Natural killer cell (primary cell): ENCODE measurements at regions of chr4 and their contacts with region 1.

Region 1: DNA sequence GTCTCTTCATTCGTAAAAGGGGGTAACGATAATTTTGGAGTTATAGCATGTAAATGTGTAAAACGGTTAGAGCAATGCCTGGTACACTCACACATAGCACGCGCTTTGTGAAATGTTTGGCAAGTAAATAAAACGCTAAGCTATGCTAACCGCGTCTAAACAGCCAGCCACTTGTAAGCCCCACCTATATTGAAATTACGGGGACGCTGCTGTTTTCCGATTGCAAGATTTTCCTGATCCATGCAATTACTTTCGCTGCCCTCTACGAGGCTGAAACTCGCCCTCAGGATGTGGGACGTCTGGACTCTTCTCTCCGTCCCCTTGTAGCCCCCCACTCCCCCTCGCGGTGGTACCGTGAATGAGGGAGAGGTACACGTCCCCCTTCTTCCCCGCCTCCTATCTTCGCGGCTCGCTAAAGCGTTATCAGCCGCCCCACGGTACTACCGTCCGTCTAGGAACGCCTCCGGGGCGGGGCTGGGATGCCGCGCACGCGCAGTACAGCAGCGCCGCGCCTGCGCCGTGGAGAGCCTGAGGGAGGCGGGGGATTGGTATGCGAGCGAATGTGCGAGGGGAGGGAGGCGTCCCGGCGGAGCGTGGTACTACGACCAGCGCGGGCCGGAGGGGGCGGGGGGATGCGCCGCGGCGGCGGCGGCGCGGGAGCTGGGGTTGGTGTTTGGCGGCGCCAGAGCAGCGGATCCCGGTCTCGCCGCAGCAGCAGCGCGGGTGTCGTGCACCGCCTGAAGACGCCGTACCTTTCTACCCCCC is at the start of gene STIM2:
- DNase-seq: peak; percentile 99
- ATAC-seq: peak; percentile 65 to 86 (median 72)
- H3K4me3 ChIP-seq: peak within 1 kb of the TSS; percentile 67
- H3K4me3 Mint-ChIP-seq: peak within 1 kb of the TSS; percentile 100
- H3K27ac ChIP-seq: peak within 1 kb of the TSS; percentile 84
- H3K27ac Mint-ChIP-seq: peak within 1 kb of the TSS; percentile 95 to 98
- H3K4me1 ChIP-seq: peaks cover 18% of the 10 kb centered on the region
- H3K4me1 Mint-ChIP-seq: peaks cover 69 to 71% of the 10 kb centered on the region in 2 donors
- H3K27me3 ChIP-seq: no peaks in the 10 kb centered on the region
- H3K27me3 Mint-ChIP-seq: no peaks in the 10 kb centered on the region
- CTCF ChIP-seq: peak; percentile 10
- total RNA-seq, gene STIM2: 98.3 to 104 (median 100) TPM

Region 2: GRCh38 chr4:26320538-26321325 is 539.6 kb before region 1 on chr4 and contains the start of gene RBPJ:
- intact Hi-C with region 1: loop called (anchors 2 kb)
- DNase-seq: peak; percentile 82 to 93
- ATAC-seq: peak; percentile 45 to 52 (median 49)
- H3K4me3 ChIP-seq: peak within 1 kb of the TSS; percentile 96
- H3K4me3 Mint-ChIP-seq: peak within 1 kb of the TSS; percentile 100
- H3K27ac ChIP-seq: peak within 1 kb of the TSS; percentile 95
- H3K27ac Mint-ChIP-seq: peak within 1 kb of the TSS; percentile 92 to 96
- H3K4me1 ChIP-seq: peaks cover 27% of the 10 kb centered on the region
- H3K4me1 Mint-ChIP-seq: peaks cover 39 to 49% of the 10 kb centered on the region in 2 donors
- H3K27me3 ChIP-seq: no peaks in the 10 kb centered on the region
- H3K27me3 Mint-ChIP-seq: peaks cover 0 to 14% of the 10 kb centered on the region in 2 donors
- CTCF ChIP-seq: no peak
- total RNA-seq, gene RBPJ: 46.4 to 53.3 (median 48.8) TPM

Region 3: GRCh38 chr4:26822546-26822945 is 37.8 kb before region 1 on chr4:
- intact Hi-C with region 1: loop called (anchors 1 kb)
- DNase-seq: peak in 1 of 2 donors; percentile 41
- ATAC-seq: peak; percentile 66 to 82 (median 75)
- H3K4me3 ChIP-seq: no peak overlapping the region
- H3K4me3 Mint-ChIP-seq: peak overlapping the region; percentile 63
- H3K27ac ChIP-seq: no peak overlapping the region
- H3K27ac Mint-ChIP-seq: peak overlapping the region; percentile 84 to 92
- H3K4me1 ChIP-seq: peaks cover 23% of the 10 kb centered on the region
- H3K4me1 Mint-ChIP-seq: peaks cover 31 to 39% of the 10 kb centered on the region in 2 donors
- H3K27me3 ChIP-seq: no peaks in the 10 kb centered on the region
- H3K27me3 Mint-ChIP-seq: peaks cover 0 to 3% of the 10 kb centered on the region in 2 donors
- CTCF ChIP-seq: no peak

Region 4: GRCh38 chr4:26885912-26886274 is 25.6 kb after region 1 on chr4:
- intact Hi-C with region 1: loop called (anchors 1 kb)
- DNase-seq: peak in 1 of 2 donors; percentile 86
- ATAC-seq: peak; percentile 52 to 65 (median 65)
- H3K4me3 ChIP-seq: peak overlapping the region; percentile 15
- H3K4me3 Mint-ChIP-seq: peak overlapping the region; percentile 88
- H3K27ac ChIP-seq: peak overlapping the region; percentile 98
- H3K27ac Mint-ChIP-seq: peak overlapping the region; percentile 92 to 94
- H3K4me1 ChIP-seq: peaks cover 17% of the 10 kb centered on the region
- H3K4me1 Mint-ChIP-seq: peaks cover 70 to 73% of the 10 kb centered on the region in 2 donors
- H3K27me3 ChIP-seq: no peaks in the 10 kb centered on the region
- H3K27me3 Mint-ChIP-seq: no peaks in the 10 kb centered on the region
- CTCF ChIP-seq: no peak

Region 5: DNA sequence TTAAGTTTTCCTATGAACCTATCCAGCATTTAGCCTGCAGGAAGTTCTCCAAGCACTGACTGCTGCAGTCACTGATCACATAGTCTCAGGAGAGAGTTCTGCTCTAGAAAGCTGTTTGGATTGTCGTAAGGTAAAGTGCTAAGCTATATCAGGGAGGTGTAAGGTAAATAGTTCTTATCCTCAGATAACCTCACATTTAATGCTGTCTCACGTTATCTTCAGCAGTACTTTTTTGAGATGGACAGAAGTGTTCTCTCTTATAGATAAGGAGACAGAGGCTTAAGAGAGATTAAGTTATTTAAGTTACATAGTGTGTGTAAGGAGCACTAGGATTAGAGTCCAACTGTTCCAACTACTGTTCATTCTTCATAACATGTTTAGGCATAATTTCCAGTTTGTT is 78.2 kb after region 1 on chr4:
- intact Hi-C with region 1: no loop called
- DNase-seq: no peak
- ATAC-seq: no peak
- H3K4me3 ChIP-seq: no peak overlapping the region
- H3K4me3 Mint-ChIP-seq: no peak overlapping the region
- H3K27ac ChIP-seq: no peak overlapping the region
- H3K27ac Mint-ChIP-seq: no peak overlapping the region
- H3K4me1 ChIP-seq: peaks cover 8% of the 10 kb centered on the region
- H3K4me1 Mint-ChIP-seq: peaks cover 59 to 66% of the 10 kb centered on the region in 2 donors
- H3K27me3 ChIP-seq: no peaks in the 10 kb centered on the region
- H3K27me3 Mint-ChIP-seq: no peaks in the 10 kb centered on the region
- CTCF ChIP-seq: no peak

Region 6: GRCh38 chr4:27000820-27001219 is 140.5 kb after region 1 on chr4:
- intact Hi-C with region 1: loop called (anchors 5 kb)
- DNase-seq: peak in 1 of 2 donors; percentile 59
- ATAC-seq: peak; percentile 50 to 80 (median 67)
- H3K4me3 ChIP-seq: no peak overlapping the region
- H3K4me3 Mint-ChIP-seq: no peak overlapping the region
- H3K27ac ChIP-seq: no peak overlapping the region
- H3K27ac Mint-ChIP-seq: peak overlapping the region; percentile 20 to 65
- H3K4me1 ChIP-seq: peaks cover 5% of the 10 kb centered on the region
- H3K4me1 Mint-ChIP-seq: peaks cover 18 to 31% of the 10 kb centered on the region in 2 donors
- H3K27me3 ChIP-seq: no peaks in the 10 kb centered on the region
- H3K27me3 Mint-ChIP-seq: no peaks in the 10 kb centered on the region
- CTCF ChIP-seq: no peak

Region 7: DNA sequence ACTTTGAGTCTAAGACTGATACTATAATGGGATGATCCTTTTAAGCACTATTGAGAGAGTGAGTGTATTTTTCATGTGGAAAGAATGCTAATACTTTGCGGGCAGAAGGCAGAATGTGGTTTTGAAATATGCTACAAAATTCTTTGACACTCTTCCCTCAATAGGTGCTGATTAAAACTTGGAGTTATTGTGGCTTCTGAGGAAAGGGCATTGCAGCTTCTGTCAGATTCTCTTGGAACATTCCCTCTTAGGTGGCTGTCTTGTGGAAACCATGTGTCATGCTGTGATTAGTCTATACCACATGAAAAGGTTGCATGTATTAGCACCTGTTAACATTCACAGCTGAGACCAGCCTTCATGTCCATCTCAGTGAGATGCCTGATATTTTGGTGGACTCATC is 547.3 kb after region 1 on chr4:
- intact Hi-C with region 1: no loop called
- DNase-seq: no peak
- ATAC-seq: no peak
- H3K4me3 ChIP-seq: no peak overlapping the region
- H3K4me3 Mint-ChIP-seq: no peak overlapping the region
- H3K27ac ChIP-seq: no peak overlapping the region
- H3K27ac Mint-ChIP-seq: no peak overlapping the region
- H3K4me1 ChIP-seq: no peaks in the 10 kb centered on the region
- H3K4me1 Mint-ChIP-seq: no peaks in the 10 kb centered on the region
- H3K27me3 ChIP-seq: no peaks in the 10 kb centered on the region
- H3K27me3 Mint-ChIP-seq: no peaks in the 10 kb centered on the region
- CTCF ChIP-seq: no peak